AG04449 (cell line): ENCODE measurements at regions of chr1 and their contacts with region 1.

Region 1: DNA sequence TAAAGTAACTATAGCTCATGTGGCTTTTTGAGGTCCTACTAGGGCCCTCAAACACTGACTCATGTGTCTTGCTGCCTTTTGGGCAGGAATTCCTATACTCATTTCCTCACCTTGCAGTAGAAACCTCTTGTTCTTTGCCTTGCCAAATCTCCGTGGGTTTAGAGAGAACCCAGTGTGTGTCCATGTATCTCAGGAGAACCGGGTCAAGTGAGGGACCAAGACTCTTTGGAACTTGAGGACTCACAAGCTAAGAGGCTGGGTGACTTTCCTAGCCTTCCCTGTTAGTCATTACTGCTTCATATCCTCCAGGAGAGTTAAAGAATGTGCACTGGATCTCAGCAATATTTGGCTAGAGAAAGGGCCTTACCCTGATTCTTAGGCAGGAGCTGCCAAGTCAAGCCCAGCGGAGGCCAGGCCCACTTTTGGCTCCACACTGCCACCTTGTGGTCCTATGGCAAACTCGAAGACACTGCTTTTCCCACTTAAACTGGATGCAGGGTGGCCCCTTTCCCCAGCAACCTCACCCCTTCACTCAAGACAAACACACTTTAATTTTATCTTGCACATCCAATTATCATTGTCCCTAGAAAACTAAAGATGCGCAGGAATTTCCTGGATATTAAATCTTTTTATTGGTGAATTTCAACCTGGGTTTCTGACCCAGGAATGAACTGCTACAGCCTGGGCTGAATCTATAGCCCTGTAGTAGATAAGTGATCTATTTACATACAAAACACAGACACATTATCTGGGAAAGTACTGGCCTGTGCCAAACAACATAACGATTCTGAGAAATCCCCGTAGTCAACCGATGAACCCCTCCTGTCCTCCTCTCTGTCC is 10.6 kb downstream of the AVPR1B start:
- DNase-seq: peak; percentile 50
- H3K4me3 ChIP-seq: no peak overlapping the region
- CTCF ChIP-seq: peak; percentile 89

Region 2: DNA sequence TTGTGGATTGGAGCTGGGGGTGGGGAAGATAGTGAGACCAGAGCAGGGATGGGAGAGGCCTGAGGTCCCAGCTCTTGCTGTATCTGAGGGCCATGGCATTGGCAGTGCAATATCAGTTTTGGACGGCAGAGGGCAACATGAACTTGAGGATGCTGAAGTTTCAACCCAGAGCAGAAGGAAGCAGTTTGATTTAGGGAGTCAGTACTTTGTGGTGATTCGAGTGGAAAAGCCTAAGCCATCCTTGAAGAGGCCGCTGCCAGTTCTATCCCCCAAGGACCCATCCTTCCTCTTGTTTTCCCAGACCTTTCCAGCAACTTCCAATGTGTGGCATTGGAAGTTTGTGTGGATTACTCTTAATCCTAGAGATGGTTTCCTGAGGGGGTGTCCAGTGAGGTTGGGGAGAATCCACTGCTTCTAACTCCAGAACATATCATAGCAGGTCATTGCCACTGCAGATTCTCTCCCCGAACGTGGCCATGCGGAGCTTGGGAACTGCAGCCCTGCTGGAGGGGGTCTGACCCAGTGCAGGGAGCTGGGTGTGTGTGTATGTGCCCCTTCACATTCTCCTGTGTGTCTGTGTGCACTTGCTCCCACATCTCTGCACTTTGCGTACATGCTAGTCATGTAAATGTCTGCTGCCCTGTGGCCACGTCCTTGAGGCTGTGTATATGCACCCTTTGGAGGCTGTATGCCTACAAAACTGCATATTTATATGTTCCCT is 187.4 kb before region 1 on chr1:
- CTCF ChIA-PET with region 1: interaction called, 59 read pairs
- POLR2A ChIA-PET with region 1: no interaction called
- DNase-seq: peak; percentile 63
- H3K4me3 ChIP-seq: no peak overlapping the region
- CTCF ChIP-seq: peak; percentile 89

Region 3: DNA sequence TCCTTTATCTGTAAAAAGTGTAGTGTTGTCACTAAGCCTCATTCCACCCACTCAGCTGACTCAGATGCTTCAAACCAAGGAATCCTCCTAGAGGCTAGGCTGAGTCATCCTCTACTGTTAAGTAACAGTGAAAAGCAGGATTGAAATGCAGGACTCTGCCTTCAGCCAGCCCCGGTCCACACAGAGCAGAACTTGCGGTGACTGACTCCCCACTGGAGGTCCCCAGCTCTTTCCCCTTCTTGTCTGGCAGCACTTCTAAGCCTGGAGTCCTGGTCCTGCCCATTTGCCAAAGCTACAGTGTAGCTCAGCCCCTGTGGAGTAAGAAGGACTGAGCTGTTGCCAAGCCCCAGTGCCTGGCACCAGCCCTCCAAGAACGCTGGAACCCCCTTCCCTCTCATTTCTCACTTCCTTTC is 105.1 kb before region 1 on chr1:
- CTCF ChIA-PET with region 1: interaction called, 38 read pairs
- POLR2A ChIA-PET with region 1: no interaction called
- DNase-seq: peak; percentile 80
- H3K4me3 ChIP-seq: peak overlapping the region; percentile 33
- CTCF ChIP-seq: no peak

Region 4: DNA sequence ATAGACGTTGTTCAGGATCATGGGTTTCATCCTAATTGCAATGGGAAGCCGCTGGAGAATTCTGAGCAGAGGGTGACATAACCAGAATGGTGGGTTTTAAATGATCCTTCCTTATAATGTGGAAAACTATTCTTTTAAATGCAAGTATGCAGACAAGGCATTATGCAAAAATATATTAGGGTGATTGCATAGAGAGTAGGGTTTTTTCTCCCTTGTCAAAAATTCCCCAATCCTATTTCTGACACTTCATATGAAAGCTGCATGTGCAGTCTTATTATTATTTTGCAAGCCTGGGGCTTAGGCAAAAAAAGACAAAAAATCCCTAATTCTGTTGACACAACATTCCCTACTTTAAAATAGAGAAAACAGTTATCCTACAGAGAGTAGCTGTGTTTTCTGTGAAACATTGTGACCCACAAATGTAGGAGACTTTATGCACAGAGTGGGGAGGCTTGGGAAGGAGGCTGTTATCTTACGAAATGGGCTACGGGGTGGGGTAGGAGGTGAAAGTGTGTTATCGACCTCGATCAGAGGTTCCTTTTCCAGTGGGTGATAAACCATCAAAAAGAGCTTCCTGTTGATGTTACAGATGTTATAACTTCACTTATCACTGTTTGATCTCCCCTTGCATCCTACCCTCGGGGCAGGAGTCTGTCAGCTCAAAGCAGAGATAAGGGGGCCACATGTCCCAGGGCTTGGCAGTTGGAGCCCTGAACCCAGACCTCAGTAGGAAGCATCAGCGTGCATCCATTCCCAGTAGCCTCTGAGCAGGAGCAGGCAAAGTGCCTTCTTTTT is 26.3 kb before region 1 on chr1:
- CTCF ChIA-PET with region 1: interaction called, 25 read pairs
- POLR2A ChIA-PET with region 1: no interaction called
- DNase-seq: no peak
- H3K4me3 ChIP-seq: no peak overlapping the region
- CTCF ChIP-seq: no peak

Region 5: GRCh38 chr1:206117151-206117948 is 10.8 kb after region 1 on chr1 and contains the start of gene AVPR1B:
- CTCF ChIA-PET with region 1: interaction called, 15 read pairs
- POLR2A ChIA-PET with region 1: no interaction called
- DNase-seq: no peak
- H3K4me3 ChIP-seq: peak within 1 kb of the TSS; percentile 40
- CTCF ChIP-seq: no peak